Endothelial cell of umbilical vein (primary cell): ENCODE measurements at regions of chr3 and their contacts with region 1.

Region 1: DNA sequence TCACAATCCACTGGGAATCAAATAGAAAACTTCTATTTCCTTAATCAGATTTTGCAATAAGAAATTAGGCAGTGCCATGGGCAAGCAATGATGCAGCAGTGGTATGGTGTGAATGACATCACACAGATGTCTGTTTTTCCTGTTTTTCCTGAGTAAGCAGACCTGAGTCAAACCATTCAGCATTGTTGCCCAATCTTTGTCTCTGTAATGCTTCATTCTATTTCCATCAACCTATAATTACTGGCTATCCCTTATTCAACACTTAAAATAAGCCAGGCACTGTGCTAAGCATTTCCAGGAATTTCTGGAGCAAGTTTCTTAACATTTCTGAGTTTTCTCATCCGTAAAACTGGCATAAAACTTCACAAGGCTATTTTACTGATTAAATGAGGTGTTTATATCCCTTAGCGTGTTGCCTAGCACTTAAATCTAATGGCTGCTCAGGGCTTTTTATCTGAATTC is 11.3 kb upstream of the OXSR1 start:
- DNase-seq: no peak
- H3K4me3 ChIP-seq: no peak overlapping the region
- H3K27ac ChIP-seq: no peak overlapping the region
- H3K4me1 ChIP-seq: no peaks in the 10 kb centered on the region
- H3K27me3 ChIP-seq: no peaks in the 10 kb centered on the region
- CTCF ChIP-seq: no peak
- POLR2A ChIP-seq: no peak

Region 2: GRCh38 chr3:38164966-38165680 is 11.1 kb after region 1 on chr3 and contains the start of gene OXSR1:
- CTCF ChIA-PET with region 1: interaction called, 20 read pairs
- POLR2A ChIA-PET with region 1: interaction called, 4 read pairs
- dilution Hi-C with region 1: no loop called
- intact Hi-C with region 1: no loop called
- DNase-seq: peak; percentile 100
- H3K4me3 ChIP-seq: peak within 1 kb of the TSS; percentile 62 to 88 (median 86)
- H3K27ac ChIP-seq: peak within 1 kb of the TSS; percentile 81
- H3K4me1 ChIP-seq: peaks cover 4% of the 10 kb centered on the region
- H3K27me3 ChIP-seq: no peaks in the 10 kb centered on the region
- CTCF ChIP-seq: no peak
- POLR2A ChIP-seq: peak; percentile 85
- total RNA-seq, gene OXSR1: 32.9 and 34.3 TPM in 2 replicates